ENCODE measurements at regions of chr7 and their contacts with region 1.

Region 1: DNA sequence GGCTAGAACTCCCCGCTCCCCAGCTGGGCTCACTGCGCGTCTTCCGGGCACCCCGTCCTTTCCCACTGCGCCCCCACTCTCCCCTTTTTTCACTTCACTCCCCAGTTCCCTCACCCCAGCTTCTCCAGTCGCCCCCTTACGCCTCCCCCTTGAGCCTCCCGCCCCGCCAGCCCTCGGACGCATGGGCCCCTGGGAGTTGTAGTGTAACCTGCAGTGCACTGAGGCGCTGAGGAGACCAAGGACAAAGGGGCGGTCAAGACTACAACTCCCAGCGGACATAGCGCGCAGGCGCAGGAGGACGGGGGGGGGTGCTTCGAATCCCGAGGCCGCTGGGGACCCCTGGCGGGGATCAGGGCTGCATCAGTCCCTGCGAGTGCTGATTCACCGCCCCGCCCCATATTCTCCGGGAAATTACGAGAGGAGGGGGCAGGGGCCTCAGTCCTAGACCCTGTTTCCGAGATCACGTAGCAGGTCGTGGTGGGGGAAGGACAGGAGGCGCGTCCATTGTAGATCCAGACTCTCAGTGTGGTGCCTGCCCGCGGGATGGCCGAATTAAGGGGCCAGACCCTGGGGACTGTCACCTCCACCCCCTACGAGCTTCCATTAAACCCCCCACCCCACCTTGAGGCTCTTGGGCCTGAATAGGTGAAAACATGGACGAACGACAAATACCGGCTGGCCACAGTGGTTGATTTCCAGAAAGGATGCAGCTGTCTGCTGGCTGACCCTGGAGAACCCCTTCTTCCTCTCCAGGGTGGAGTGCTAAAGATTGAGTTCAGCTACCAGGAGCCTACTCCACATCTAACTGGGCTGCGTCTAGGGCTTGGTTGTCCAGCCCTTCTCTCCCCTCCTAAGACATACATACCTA is 554 bp upstream of the YWHAG start:
- DNase-seq: peak; percentile 88 to 99 (median 94)
- ATAC-seq: peak; percentile 90
- H3K4me3 ChIP-seq: peak overlapping the region; percentile 97
- H3K4me3 Mint-ChIP-seq: peak overlapping the region; percentile 96
- H3K27ac ChIP-seq: peak overlapping the region; percentile 93 to 96
- H3K27ac Mint-ChIP-seq: peak overlapping the region; percentile 90
- H3K4me1 ChIP-seq: peaks cover 29% of the 10 kb centered on the region
- H3K4me1 Mint-ChIP-seq: peaks cover 42% of the 10 kb centered on the region
- H3K27me3 ChIP-seq: no peaks in the 10 kb centered on the region
- H3K27me3 Mint-ChIP-seq: no peaks in the 10 kb centered on the region
- CTCF ChIP-seq: peak; percentile 70

Region 2: DNA sequence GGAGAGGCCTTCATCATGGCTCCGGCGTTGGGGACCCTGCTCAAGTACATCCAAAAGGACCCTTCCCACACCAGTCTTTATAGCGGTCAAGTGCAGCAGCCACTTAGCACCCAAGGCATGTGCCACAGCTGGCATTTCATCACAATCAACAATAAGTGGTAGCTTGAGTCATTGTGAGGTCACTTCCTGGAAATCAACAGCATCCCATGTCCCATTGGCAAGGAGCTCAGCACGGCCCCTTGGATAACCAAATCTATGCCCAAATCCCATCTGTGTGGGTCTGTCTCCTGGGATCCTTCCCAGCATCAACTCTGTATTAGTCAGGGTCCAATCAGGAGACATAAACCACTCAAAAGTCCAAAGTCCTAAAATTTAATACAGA is 284.4 kb before region 1 on chr7:
- CTCF ChIA-PET with region 1: no interaction called
- POLR2A ChIA-PET with region 1: no interaction called
- intact Hi-C with region 1: no loop called
- DNase-seq: no peak
- ATAC-seq: no peak
- H3K4me3 ChIP-seq: no peak overlapping the region
- H3K4me3 Mint-ChIP-seq: no peak overlapping the region
- H3K27ac ChIP-seq: no peak overlapping the region
- H3K27ac Mint-ChIP-seq: no peak overlapping the region
- H3K4me1 ChIP-seq: no peaks in the 10 kb centered on the region
- H3K4me1 Mint-ChIP-seq: peaks cover 10% of the 10 kb centered on the region
- H3K27me3 ChIP-seq: no peaks in the 10 kb centered on the region
- H3K27me3 Mint-ChIP-seq: no peaks in the 10 kb centered on the region
- CTCF ChIP-seq: no peak

Region 3: GRCh38 chr7:76166404-76167255 is 192.7 kb before region 1 on chr7:
- CTCF ChIA-PET with region 1: no interaction called
- POLR2A ChIA-PET with region 1: interaction called, 11 read pairs
- intact Hi-C with region 1: no loop called
- DNase-seq: peak; percentile 81 to 96 (median 90)
- ATAC-seq: peak; percentile 88
- H3K4me3 ChIP-seq: peak overlapping the region; percentile 92
- H3K4me3 Mint-ChIP-seq: peak overlapping the region; percentile 93
- H3K27ac ChIP-seq: peak overlapping the region; percentile 75 to 87
- H3K27ac Mint-ChIP-seq: peak overlapping the region; percentile 99
- H3K4me1 ChIP-seq: peaks cover 16% of the 10 kb centered on the region
- H3K4me1 Mint-ChIP-seq: peaks cover 12% of the 10 kb centered on the region
- H3K27me3 ChIP-seq: no peaks in the 10 kb centered on the region
- H3K27me3 Mint-ChIP-seq: no peaks in the 10 kb centered on the region
- CTCF ChIP-seq: no peak

Region 4: GRCh38 chr7:76179686-76180085 is 179.7 kb before region 1 on chr7:
- CTCF ChIA-PET with region 1: no interaction called
- POLR2A ChIA-PET with region 1: no interaction called
- intact Hi-C with region 1: loop called in 1 of 2 experiments (anchors 5 kb)
- DNase-seq: no peak
- ATAC-seq: no peak
- H3K4me3 ChIP-seq: no peak overlapping the region
- H3K4me3 Mint-ChIP-seq: no peak overlapping the region
- H3K27ac ChIP-seq: no peak overlapping the region
- H3K27ac Mint-ChIP-seq: no peak overlapping the region
- H3K4me1 ChIP-seq: peaks cover 6% of the 10 kb centered on the region
- H3K4me1 Mint-ChIP-seq: no peaks in the 10 kb centered on the region
- H3K27me3 ChIP-seq: no peaks in the 10 kb centered on the region
- H3K27me3 Mint-ChIP-seq: no peaks in the 10 kb centered on the region
- CTCF ChIP-seq: no peak

Region 5: GRCh38 chr7:76201730-76202665 is 157.3 kb before region 1 on chr7 and contains the start of gene SRRM3:
- CTCF ChIA-PET with region 1: no interaction called
- POLR2A ChIA-PET with region 1: no interaction called
- intact Hi-C with region 1: no loop called
- DNase-seq: peak; percentile 72 to 91 (median 80)
- ATAC-seq: peak; percentile 97
- H3K4me3 ChIP-seq: no peak within 1 kb of the TSS
- H3K4me3 Mint-ChIP-seq: no peak within 1 kb of the TSS
- H3K27ac ChIP-seq: no peak within 1 kb of the TSS
- H3K27ac Mint-ChIP-seq: no peak within 1 kb of the TSS
- H3K4me1 ChIP-seq: peaks cover 7% of the 10 kb centered on the region
- H3K4me1 Mint-ChIP-seq: no peaks in the 10 kb centered on the region
- H3K27me3 ChIP-seq: peaks cover 12 to 13% of the 10 kb centered on the region in 2 experiments
- H3K27me3 Mint-ChIP-seq: peaks cover 48% of the 10 kb centered on the region
- CTCF ChIP-seq: peak; percentile 51
- total RNA-seq, gene SRRM3: not detected

Region 6: DNA sequence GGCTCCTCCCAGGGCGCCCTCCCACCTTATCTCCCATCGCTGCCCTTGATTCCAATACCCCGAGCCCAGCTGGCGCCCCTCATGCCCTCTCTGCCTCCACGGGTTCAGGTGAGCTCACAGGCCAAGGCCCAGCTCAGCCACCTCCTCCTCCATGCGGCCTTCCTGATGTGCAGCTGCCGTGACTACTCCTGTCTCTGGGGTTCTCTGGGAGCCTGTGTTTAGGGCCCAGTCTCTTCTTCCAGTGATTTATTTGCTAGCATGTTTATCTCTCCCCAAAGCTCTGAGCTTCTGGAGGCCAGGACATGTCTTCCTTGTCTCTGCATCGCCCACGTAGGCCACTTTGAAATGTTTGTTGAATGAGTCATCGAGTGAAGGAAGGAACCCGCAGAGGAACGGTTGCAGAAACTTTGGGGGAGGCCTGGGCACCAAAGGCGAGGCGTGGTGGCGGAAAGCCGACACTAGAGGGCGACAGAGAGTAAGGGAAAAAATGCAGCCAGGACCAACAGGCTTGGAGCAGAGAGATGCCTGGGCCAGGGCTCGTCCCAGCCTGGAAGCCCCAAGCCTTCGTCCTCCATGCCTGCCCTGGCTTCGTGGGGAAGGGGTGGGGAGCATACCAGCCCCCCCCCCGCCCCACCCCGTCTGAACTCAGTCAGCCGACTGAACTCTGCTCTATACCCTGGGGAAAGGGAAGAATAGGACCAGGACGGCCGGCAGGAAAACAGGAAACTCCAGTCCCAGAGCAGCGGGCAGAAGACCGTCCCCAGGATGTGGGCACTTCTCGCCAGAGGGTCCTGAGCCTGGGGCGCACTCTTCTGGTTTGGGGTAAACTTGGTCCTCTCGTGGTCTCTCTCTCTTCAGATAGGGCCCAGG is 67.8 kb before region 1 on chr7:
- CTCF ChIA-PET with region 1: interaction called, 3 read pairs
- POLR2A ChIA-PET with region 1: no interaction called
- intact Hi-C with region 1: loop called in 1 of 2 experiments (anchors 2 kb)
- DNase-seq: peak; percentile 65 to 92 (median 82)
- ATAC-seq: peak; percentile 92
- H3K4me3 ChIP-seq: no peak overlapping the region
- H3K4me3 Mint-ChIP-seq: no peak overlapping the region
- H3K27ac ChIP-seq: no peak overlapping the region
- H3K27ac Mint-ChIP-seq: no peak overlapping the region
- H3K4me1 ChIP-seq: peaks cover 12% of the 10 kb centered on the region
- H3K4me1 Mint-ChIP-seq: peaks cover 4% of the 10 kb centered on the region
- H3K27me3 ChIP-seq: no peaks in the 10 kb centered on the region
- H3K27me3 Mint-ChIP-seq: no peaks in the 10 kb centered on the region
- CTCF ChIP-seq: peak; percentile 92

Region 7: GRCh38 chr7:76302347-76303201 is 56.8 kb before region 1 on chr7 and contains the start of gene HSPB1:
- CTCF ChIA-PET with region 1: no interaction called
- POLR2A ChIA-PET with region 1: interaction called, 15 read pairs
- intact Hi-C with region 1: no loop called
- DNase-seq: peak; percentile 41 to 86 (median 64)
- ATAC-seq: peak; percentile 73
- H3K4me3 ChIP-seq: peak within 1 kb of the TSS; percentile 80
- H3K4me3 Mint-ChIP-seq: peak within 1 kb of the TSS; percentile 96
- H3K27ac ChIP-seq: peak within 1 kb of the TSS; percentile 29 to 46
- H3K27ac Mint-ChIP-seq: peak within 1 kb of the TSS; percentile 57
- H3K4me1 ChIP-seq: peaks cover 24% of the 10 kb centered on the region
- H3K4me1 Mint-ChIP-seq: peaks cover 21% of the 10 kb centered on the region
- H3K27me3 ChIP-seq: no peaks in the 10 kb centered on the region
- H3K27me3 Mint-ChIP-seq: no peaks in the 10 kb centered on the region
- CTCF ChIP-seq: no peak
- total RNA-seq, gene HSPB1: 38.0 to 38.6 TPM

Region 8: DNA sequence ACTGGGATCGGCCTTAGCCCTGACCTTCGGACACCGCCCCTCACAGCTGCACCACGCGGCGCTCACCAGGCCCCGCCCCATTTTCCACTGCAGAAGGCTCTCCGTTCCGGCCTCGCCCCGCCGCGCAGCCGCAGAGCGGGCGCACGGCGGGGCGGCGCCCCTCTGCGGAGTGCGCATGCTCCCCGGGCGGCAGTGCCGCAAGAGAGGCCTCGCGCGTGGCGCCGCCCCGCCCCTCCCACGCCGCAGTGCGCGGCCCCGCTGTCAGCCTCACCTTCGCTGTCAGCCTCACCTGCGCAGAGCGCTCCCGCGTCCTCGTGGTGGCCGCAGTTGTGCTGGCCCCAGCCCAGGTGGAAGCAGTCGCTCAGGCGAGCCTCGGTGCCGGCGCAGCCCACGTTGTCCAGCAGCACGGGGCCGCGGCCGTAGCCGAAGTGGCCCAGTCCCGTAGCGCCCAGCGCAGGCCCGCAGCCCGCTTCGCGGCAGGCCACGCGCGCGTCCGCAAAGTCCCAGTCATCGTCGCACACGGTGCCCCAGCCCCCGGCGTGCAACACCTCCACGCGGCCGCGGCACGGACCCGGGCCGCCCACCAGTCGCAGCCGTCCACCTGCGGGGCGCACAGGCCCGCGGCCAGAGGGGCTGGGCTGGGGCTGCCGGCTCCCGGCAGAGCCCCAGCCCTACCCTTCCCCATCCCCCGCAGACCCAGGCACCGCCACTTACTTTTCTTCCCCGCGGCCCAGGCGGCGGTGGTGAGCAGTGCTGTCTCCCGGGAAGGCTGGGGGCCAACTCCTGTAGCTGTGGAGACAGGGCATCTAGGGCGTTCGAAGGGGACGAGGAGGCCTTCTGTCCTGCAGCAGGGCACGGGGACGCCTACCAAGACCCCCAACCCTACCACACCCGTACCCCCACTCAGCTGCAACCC is 34.0 kb after region 1 on chr7:
- CTCF ChIA-PET with region 1: no interaction called
- POLR2A ChIA-PET with region 1: interaction called, 27 read pairs
- intact Hi-C with region 1: loop called (anchors 1 to 5 kb)
- DNase-seq: peak; percentile 81 to 97 (median 90)
- ATAC-seq: peak; percentile 81
- H3K4me3 ChIP-seq: peak overlapping the region; percentile 60
- H3K4me3 Mint-ChIP-seq: peak overlapping the region; percentile 88
- H3K27ac ChIP-seq: peak overlapping the region; percentile 42 to 46
- H3K27ac Mint-ChIP-seq: peak overlapping the region; percentile 88
- H3K4me1 ChIP-seq: peaks cover 33% of the 10 kb centered on the region
- H3K4me1 Mint-ChIP-seq: peaks cover 22% of the 10 kb centered on the region
- H3K27me3 ChIP-seq: no peaks in the 10 kb centered on the region
- H3K27me3 Mint-ChIP-seq: no peaks in the 10 kb centered on the region
- CTCF ChIP-seq: no peak

Measured in CD4-positive, alpha-beta T cell (primary cell).